Caco-2 (cell line): ENCODE measurements at regions of chr12 and their contacts with region 1.

Region 1: GRCh38 chr12:104201238-104202001 is 14.2 kb upstream of the TXNRD1 start:
- DNase-seq: peak; percentile 51 to 58
- H3K4me3 ChIP-seq: no peak overlapping the region
- H3K4me3 Mint-ChIP-seq: no peak overlapping the region
- H3K27ac Mint-ChIP-seq: no peak overlapping the region
- H3K4me1 ChIP-seq: no peaks in the 10 kb centered on the region
- H3K4me1 Mint-ChIP-seq: no peaks in the 10 kb centered on the region
- H3K27me3 ChIP-seq: no peaks in the 10 kb centered on the region
- H3K27me3 Mint-ChIP-seq: peaks cover 10% of the 10 kb centered on the region
- CTCF ChIP-seq: peak; percentile 70 to 76

Region 2: GRCh38 chr12:104294845-104295688 is 93.6 kb after region 1 on chr12:
- CTCF ChIA-PET with region 1: no interaction called
- POLR2A ChIA-PET with region 1: no interaction called
- intact Hi-C with region 1: loop called (anchors 1 kb)
- DNase-seq: peak; percentile 38 to 54
- H3K4me3 ChIP-seq: no peak overlapping the region
- H3K4me3 Mint-ChIP-seq: peak overlapping the region; percentile 46
- H3K27ac Mint-ChIP-seq: peak overlapping the region; percentile 50
- H3K4me1 ChIP-seq: peaks cover 26% of the 10 kb centered on the region
- H3K4me1 Mint-ChIP-seq: peaks cover 22% of the 10 kb centered on the region
- H3K27me3 ChIP-seq: no peaks in the 10 kb centered on the region
- H3K27me3 Mint-ChIP-seq: no peaks in the 10 kb centered on the region
- CTCF ChIP-seq: no peak

Region 3: DNA sequence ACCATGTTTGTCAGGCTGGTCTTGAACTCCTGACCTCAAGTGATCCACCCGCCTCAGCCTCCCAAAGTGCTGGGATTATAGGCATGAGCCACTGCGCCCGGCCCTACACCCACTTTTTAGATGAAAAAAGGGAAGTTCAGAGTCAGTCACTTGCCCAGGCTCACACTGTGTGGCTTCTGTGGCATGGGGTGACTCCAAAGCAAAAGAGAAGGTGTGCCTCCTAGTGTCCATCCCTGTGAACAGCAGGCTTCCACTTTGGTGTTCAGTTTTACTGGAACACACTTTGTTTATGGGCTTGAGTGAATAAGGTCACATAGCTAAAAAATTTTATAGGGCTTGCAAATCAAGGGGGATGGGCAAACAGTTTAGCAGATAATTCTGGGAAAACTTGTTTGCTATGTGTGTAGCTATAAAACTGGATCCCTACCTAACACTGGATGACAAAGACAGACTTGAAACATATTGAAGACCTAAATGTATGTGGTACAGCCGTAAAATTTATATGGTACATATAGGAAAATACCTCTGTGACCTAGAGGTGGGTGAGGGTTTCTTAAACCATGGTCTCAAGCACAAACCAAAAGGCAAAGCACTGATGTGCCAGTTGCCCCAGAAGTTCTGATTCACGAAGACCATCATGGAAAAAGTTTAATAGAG is 157.1 kb after region 1 on chr12:
- CTCF ChIA-PET with region 1: no interaction called
- POLR2A ChIA-PET with region 1: no interaction called
- intact Hi-C with region 1: loop called (anchors 1 kb)
- DNase-seq: peak in 1 of 2 experiments; percentile 46
- H3K4me3 ChIP-seq: no peak overlapping the region
- H3K4me3 Mint-ChIP-seq: no peak overlapping the region
- H3K27ac Mint-ChIP-seq: no peak overlapping the region
- H3K4me1 ChIP-seq: peaks cover 3% of the 10 kb centered on the region; the same call in 1 of the 2 replicates
- H3K4me1 Mint-ChIP-seq: peaks cover 14% of the 10 kb centered on the region
- H3K27me3 ChIP-seq: no peaks in the 10 kb centered on the region
- H3K27me3 Mint-ChIP-seq: no peaks in the 10 kb centered on the region
- CTCF ChIP-seq: peak; percentile 53 to 78